HEK293 (cell line): ENCODE measurements at regions of chr10 and their contacts with region 1.

Region 1: DNA sequence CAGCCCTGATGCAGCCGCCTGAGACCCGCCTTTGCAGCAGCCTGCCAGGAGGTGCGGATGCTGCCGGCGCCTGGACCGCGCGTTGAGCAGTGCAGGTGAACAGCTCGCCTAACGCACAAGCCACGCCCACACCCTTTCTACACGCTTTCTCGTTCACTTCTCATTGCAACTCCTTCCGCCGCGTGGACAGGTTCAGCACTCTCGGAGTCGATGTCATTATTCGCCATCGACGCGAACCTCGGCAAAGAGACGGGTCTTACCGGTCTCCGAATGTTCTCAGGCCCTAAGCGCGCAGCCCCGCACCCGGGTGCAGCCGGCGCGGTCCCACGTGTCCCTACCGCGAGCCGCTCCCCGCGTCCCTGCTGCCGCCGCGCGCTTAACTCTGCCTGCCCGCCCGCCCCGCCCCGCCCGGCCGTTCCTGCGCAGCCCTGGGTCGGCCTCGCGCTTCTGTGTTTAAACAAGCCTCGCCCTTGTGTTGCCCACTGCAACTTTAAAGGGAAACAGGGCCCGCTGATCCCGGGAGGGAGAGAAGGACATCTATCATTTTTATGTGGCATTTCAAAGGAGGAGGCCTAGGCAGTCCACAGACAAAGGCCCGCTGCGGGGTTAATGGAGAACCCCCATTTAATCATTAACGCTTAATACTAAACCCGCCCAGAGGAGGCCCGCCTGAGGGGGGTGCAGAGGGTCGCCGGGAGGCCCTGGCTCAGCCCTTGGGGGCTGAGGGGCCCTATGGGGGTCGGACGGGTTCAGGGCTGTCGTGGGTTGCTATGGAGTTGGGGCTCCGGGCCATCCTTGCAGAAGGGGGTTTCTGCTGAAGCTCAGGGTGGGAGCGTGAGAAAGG is 128.5 kb downstream of the WDR11 start:
- H3K4me3 ChIP-seq: peak overlapping the region; percentile 32
- H3K27ac ChIP-seq: peak overlapping the region; percentile 86
- H3K4me1 ChIP-seq: peaks cover 46% of the 10 kb centered on the region
- CTCF ChIP-seq: no peak

Region 2: GRCh38 chr10:120966657-120967045 is 13.0 kb before region 1 on chr10:
- CTCF ChIA-PET with region 1: interaction called, 4 read pairs
- POLR2A ChIA-PET with region 1: interaction called, 10 read pairs
- H3K4me3 ChIP-seq: no peak overlapping the region
- H3K27ac ChIP-seq: peak overlapping the region; percentile 26; the same call in 1 of the 2 replicates
- H3K4me1 ChIP-seq: peaks cover 15% of the 10 kb centered on the region
- CTCF ChIP-seq: no peak